Activated CD4-positive, alpha-beta memory T cell treated with anti-CD3 and anti-CD28 coated beads, Interleukin-2, amount 10 ng/mL, durations not matched to agents 7 days and 5 days (primary cell): ENCODE measurements at regions of chr13 and their contacts with region 1.

Region 1: GRCh38 chr13:91406619-91407018 is 8.2 kb downstream of the GPC5 start:
- DNase-seq: no peak
- H3K4me3 Mint-ChIP-seq: no peak overlapping the region
- H3K27ac Mint-ChIP-seq: no peak overlapping the region
- H3K4me1 Mint-ChIP-seq: no peaks in the 10 kb centered on the region
- H3K27me3 Mint-ChIP-seq: peaks cover 41% of the 10 kb centered on the region

Region 2: GRCh38 chr13:91313103-91313502 is 93.5 kb before region 1 on chr13:
- CTCF ChIA-PET with region 1: interaction called, 16 read pairs
- POLR2A ChIA-PET with region 1: no interaction called
- DNase-seq: no peak
- H3K4me3 Mint-ChIP-seq: no peak overlapping the region
- H3K27ac Mint-ChIP-seq: no peak overlapping the region
- H3K4me1 Mint-ChIP-seq: peaks cover 19% of the 10 kb centered on the region
- H3K27me3 Mint-ChIP-seq: peaks cover 19% of the 10 kb centered on the region

Region 3: GRCh38 chr13:91375116-91375729 is 31.4 kb before region 1 on chr13:
- CTCF ChIA-PET with region 1: interaction called, 21 read pairs
- POLR2A ChIA-PET with region 1: no interaction called
- DNase-seq: no peak
- H3K4me3 Mint-ChIP-seq: no peak overlapping the region
- H3K27ac Mint-ChIP-seq: no peak overlapping the region
- H3K4me1 Mint-ChIP-seq: peaks cover 3% of the 10 kb centered on the region
- H3K27me3 Mint-ChIP-seq: peaks cover 18% of the 10 kb centered on the region